GM12878 (cell line): ENCODE measurements at regions of chr3 and their contacts with region 1.

Region 1: GRCh38 chr3:6132684-6133432 is 728.1 kb upstream of the GRM7 start:
- DNase-seq: peak; percentile 71
- ATAC-seq: peak; percentile 95
- H3K4me3 ChIP-seq: no peak overlapping the region
- H3K27ac ChIP-seq: peak overlapping the region; percentile 56
- H3K4me1 ChIP-seq: no peaks in the 10 kb centered on the region
- H3K27me3 ChIP-seq: no peaks in the 10 kb centered on the region
- CTCF ChIP-seq: no peak
- EP300 ChIP-seq: 0 out of 4 replicates have a peak, but pooled peaks of 1 of the 2 experiments have one; percentile 23
- POLR2A ChIP-seq: no peak
- RAD21 ChIP-seq: no peak

Region 2: GRCh38 chr3:5951026-5951425 is 181.8 kb before region 1 on chr3:
- CTCF ChIA-PET with region 1: no interaction called
- POLR2A ChIA-PET with region 1: no interaction called
- RAD21 ChIA-PET with region 1: no interaction called
- SMC1A ChIA-PET with region 1: no interaction called
- in situ Hi-C with region 1: no loop called
- intact Hi-C with region 1: loop called (anchors 5 kb)
- DNase-seq: no peak
- ATAC-seq: no peak
- H3K4me3 ChIP-seq: no peak overlapping the region
- H3K27ac ChIP-seq: no peak overlapping the region
- H3K4me1 ChIP-seq: no peaks in the 10 kb centered on the region
- H3K27me3 ChIP-seq: no peaks in the 10 kb centered on the region
- CTCF ChIP-seq: no peak
- EP300 ChIP-seq: no peak
- POLR2A ChIP-seq: no peak
- RAD21 ChIP-seq: no peak

Region 3: GRCh38 chr3:6088433-6088832 is 44.4 kb before region 1 on chr3:
- CTCF ChIA-PET with region 1: no interaction called
- POLR2A ChIA-PET with region 1: no interaction called
- RAD21 ChIA-PET with region 1: no interaction called
- SMC1A ChIA-PET with region 1: no interaction called
- in situ Hi-C with region 1: no loop called
- intact Hi-C with region 1: no loop called
- DNase-seq: no peak
- ATAC-seq: peak; percentile 78
- H3K4me3 ChIP-seq: no peak overlapping the region
- H3K27ac ChIP-seq: no peak overlapping the region
- H3K4me1 ChIP-seq: no peaks in the 10 kb centered on the region
- H3K27me3 ChIP-seq: no peaks in the 10 kb centered on the region
- CTCF ChIP-seq: 0 out of 6 replicates have a peak, but pooled peaks of 1 of the 3 experiments have one; percentile 10
- EP300 ChIP-seq: no peak
- POLR2A ChIP-seq: no peak
- RAD21 ChIP-seq: peak; percentile 41; the same call in 1 of the 2 replicates

Region 4: DNA sequence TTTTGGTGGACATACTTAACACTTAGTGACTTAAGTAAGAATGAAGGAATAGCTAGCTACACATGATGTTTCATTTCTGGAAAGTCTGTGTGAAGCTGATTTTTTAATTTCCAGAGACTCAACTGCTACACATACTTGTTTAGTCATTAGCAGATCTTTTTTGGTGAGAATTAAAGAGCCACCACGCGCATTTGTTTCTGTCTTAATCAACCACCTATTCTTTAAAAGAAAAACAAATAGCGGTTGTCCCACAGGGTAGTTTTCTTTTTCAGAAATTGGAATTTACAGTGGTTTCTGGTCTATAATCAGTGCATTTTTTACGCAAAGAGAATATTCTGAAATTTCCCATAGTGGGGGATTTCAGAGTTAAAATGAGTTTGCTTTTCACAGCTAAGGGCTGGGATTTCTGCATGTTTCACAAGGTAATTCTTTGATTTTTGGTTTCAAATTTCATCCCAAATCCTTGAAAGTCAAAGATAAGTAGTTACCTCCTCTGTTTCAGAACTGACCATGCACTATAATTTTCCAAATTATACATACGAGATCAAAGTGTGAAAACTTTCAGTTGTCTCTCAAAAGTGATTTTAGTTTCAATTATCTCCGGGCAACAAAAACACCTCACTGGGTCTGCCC is 97.0 kb after region 1 on chr3:
- CTCF ChIA-PET with region 1: no interaction called
- POLR2A ChIA-PET with region 1: no interaction called
- RAD21 ChIA-PET with region 1: no interaction called
- SMC1A ChIA-PET with region 1: interaction called, 3 read pairs
- in situ Hi-C with region 1: no loop called
- intact Hi-C with region 1: loop called (anchors 2 kb)
- DNase-seq: peak; percentile 70
- ATAC-seq: peak; percentile 83
- H3K4me3 ChIP-seq: no peak overlapping the region
- H3K27ac ChIP-seq: peak overlapping the region; percentile 68
- H3K4me1 ChIP-seq: peaks cover 3% of the 10 kb centered on the region; the same call in 1 of the 2 replicates
- H3K27me3 ChIP-seq: no peaks in the 10 kb centered on the region
- CTCF ChIP-seq: no peak
- EP300 ChIP-seq: peak in 1 of 2 experiments; percentile 70; a peak in 1 of 4 replicates
- POLR2A ChIP-seq: no peak
- RAD21 ChIP-seq: no peak